ENCODE measurements at regions of chr3 and their contacts with region 1.

Region 1: GRCh38 chr3:70273492-70273891 is 38.9 kb downstream of the MDFIC2 start:
- DNase-seq: no peak
- ATAC-seq: no peak

Region 2: GRCh38 chr3:69484507-69485393 is 788.7 kb before region 1 on chr3:
- intact Hi-C with region 1: loop called (anchors 5 kb)
- DNase-seq: no peak
- ATAC-seq: peak; percentile 34

Measured in sciatic nerve (tissue), 2 donors.